Dorsolateral prefrontal cortex (tissue), 120 donors: ENCODE measurements at regions of chr18 and their contacts with region 1.

Region 1: DNA sequence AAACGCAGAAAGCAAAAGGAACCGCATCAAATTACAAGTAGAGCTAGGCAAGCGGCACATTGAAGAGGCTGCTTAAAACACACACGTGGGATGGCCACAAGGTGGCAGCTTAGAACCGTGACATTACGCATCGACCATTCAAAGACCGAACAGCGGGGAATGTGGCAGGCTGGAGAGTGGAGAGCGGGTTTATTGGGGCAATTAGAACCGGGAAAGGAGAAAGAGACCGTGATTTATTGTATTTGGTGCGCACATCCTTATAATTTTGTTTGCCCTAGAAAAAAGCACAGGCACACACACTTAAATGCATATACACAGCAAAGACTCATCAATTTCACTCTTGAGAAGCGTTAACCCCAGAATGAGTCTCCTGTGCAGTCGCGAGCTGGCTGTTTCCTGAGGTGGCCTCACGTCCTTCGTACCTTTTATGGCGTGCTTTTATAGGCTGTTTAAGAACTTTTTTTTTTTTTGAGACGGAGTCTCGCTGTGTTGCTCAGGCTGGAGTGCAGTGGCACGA is 31.7 kb upstream of the MEP1B start:
- DNase-seq: peak; percentile 61 to 91 (median 84)
- H3K4me3 ChIP-seq: peak overlapping the region in 57 of 59 donors; percentile 4 to 64 (median 46)
- H3K27ac ChIP-seq: no peak overlapping the region
- H3K27me3 ChIP-seq: no peaks in the 10 kb centered on the region
- CTCF ChIP-seq: peak; percentile 70 to 97 (median 90)

Region 2: GRCh38 chr18:32552421-32553030 is 394.4 kb after region 1 on chr18:
- intact Hi-C with region 1: loop called (anchors 2 kb)
- DNase-seq: peak in 6 of 10 donors; percentile 26 to 64 (median 48)
- H3K4me3 ChIP-seq: no peak overlapping the region
- H3K27ac ChIP-seq: no peak overlapping the region
- H3K27me3 ChIP-seq: no peaks in the 10 kb centered on the region
- CTCF ChIP-seq: peak; percentile 54 to 90 (median 78)